ENCODE measurements at regions of chr4 and their contacts with region 1.

Region 1: DNA sequence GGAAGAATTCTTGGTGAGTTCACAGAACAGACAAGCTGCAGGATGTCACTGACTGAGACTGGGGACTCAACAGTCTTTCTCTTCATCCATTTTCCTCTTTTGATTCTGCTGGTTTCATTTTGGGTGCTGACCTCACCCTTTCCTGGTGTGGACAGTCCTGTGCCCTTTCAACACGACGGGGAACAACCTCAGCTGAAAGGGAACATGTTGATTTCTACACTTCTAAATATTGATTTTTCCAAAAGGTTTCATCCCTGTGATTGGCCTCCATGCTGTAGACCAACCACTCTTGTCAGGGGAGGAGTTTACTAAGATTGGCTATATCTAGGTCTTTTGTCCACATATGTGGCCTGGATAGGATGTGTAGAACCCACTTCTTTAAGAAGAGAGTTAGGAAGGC is 91.8 kb downstream of the SLC4A4 start:
- DNase-seq: no peak
- ATAC-seq: no peak
- H3K4me3 ChIP-seq: no peak overlapping the region
- H3K27ac ChIP-seq: no peak overlapping the region
- H3K4me1 ChIP-seq: no peaks in the 10 kb centered on the region; the same call in 1 of the 2 replicates
- H3K27me3 ChIP-seq: no peaks in the 10 kb centered on the region
- CTCF ChIP-seq: no peak
- POLR2A ChIP-seq: no peak
- RAD21 ChIP-seq: no peak

Region 2: DNA sequence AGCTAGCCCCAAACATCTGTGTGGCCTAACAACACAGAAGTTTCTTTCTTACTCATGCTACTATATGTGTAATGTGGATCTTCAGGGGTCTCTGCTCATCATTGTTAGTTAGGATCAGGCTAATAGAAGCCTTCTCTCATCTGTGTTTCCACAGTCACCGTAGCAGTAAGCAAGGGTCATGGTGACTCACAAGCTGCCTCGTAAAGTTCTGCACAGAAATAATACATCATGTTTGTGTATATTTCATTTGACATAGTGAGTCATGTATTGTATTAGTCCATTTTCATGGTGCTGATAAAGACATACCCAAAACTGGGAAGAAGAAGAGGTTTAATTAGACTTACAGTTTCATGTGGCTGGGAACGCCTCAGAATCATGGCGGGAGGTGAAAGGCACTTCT is 53.0 kb before region 1 on chr4:
- CTCF ChIA-PET with region 1: no interaction called
- POLR2A ChIA-PET with region 1: no interaction called
- dilution Hi-C with region 1: no loop called
- in situ Hi-C with region 1: no loop called
- intact Hi-C with region 1: loop called (anchors 5 kb)
- DNase-seq: peak; percentile 95
- ATAC-seq: peak; percentile 89
- H3K4me3 ChIP-seq: no peak overlapping the region
- H3K27ac ChIP-seq: no peak overlapping the region
- H3K4me1 ChIP-seq: peaks cover 6% of the 10 kb centered on the region; the same call in 1 of the 2 replicates
- H3K27me3 ChIP-seq: no peaks in the 10 kb centered on the region
- CTCF ChIP-seq: no peak
- POLR2A ChIP-seq: no peak
- RAD21 ChIP-seq: no peak

Measured in IMR-90 (cell line).